Ovary (tissue), 10 donors: ENCODE measurements at regions of chr1 and their contacts with region 1.

Region 1: DNA sequence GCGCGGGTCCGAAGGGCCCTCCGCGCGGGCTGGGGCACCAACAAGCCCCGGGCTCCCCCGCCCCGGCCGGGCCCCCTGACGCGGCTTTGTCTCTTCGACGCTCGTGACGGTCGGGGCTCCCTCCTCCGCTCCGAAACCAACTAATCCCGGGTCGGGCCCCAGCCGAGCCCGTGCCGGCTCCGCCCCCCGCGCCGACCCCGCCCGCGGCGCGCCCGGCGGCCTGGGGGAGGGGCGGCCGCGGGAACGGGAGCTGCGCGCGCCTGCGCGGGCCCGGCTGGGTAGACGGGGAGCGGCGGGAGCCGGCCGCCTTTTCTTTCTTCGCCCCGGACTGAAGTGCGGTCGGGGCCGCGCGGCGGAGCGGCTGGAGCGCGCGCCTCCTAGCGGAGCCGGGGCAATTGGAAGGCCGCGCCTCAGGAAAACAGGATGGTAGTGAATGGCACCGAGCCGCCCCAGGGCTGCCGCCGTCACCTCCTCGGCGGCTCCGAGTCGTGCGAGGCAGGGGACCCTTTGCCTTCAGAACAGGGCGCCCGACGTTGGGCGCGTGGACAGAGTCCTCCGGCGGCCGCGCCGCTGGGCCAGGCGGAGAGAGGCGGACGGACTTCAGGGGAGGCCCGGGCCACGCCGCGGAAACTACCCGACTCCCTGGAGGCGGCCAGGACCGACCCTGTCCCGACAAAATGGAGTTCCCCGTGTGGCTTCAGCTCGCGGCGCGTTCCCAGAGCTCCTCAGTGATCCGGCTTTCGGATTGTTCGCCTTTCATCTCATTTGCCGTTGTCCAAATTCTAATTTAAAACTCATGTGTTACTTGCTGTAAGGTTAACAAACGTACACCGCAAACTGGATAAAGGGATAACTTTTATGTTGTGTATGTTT is at the start of gene TP53BP2:
- DNase-seq: peak; percentile 88 to 94 (median 90)
- H3K4me3 ChIP-seq: peak within 1 kb of the TSS; percentile 84
- H3K27ac ChIP-seq: peak within 1 kb of the TSS; percentile 98 to 99
- H3K4me1 ChIP-seq: peaks cover 4% of the 10 kb centered on the region
- H3K27me3 ChIP-seq: no peaks in the 10 kb centered on the region
- CTCF ChIP-seq: peak; percentile 74 to 90 (median 76)
- EP300 ChIP-seq: no peak
- POLR2A ChIP-seq: peak; percentile 82
- total RNA-seq, gene TP53BP2: 29.3 to 43.6 (median 39.3) TPM

Region 2: GRCh38 chr1:223712194-223712849 is 133.7 kb before region 1 on chr1 and contains the start of gene CAPN2:
- intact Hi-C with region 1: loop called in 1 of 4 experiments (anchors 10 kb)
- DNase-seq: peak; percentile 85 to 91 (median 88)
- H3K4me3 ChIP-seq: peak within 1 kb of the TSS; percentile 92
- H3K27ac ChIP-seq: peak within 1 kb of the TSS; percentile 91 to 93
- H3K4me1 ChIP-seq: peaks cover 22% of the 10 kb centered on the region
- H3K27me3 ChIP-seq: no peaks in the 10 kb centered on the region
- CTCF ChIP-seq: peak; percentile 54 to 93 (median 93)
- EP300 ChIP-seq: no peak
- POLR2A ChIP-seq: peak; percentile 77
- total RNA-seq, gene CAPN2: 96.1 to 267 (median 171) TPM

Region 3: DNA sequence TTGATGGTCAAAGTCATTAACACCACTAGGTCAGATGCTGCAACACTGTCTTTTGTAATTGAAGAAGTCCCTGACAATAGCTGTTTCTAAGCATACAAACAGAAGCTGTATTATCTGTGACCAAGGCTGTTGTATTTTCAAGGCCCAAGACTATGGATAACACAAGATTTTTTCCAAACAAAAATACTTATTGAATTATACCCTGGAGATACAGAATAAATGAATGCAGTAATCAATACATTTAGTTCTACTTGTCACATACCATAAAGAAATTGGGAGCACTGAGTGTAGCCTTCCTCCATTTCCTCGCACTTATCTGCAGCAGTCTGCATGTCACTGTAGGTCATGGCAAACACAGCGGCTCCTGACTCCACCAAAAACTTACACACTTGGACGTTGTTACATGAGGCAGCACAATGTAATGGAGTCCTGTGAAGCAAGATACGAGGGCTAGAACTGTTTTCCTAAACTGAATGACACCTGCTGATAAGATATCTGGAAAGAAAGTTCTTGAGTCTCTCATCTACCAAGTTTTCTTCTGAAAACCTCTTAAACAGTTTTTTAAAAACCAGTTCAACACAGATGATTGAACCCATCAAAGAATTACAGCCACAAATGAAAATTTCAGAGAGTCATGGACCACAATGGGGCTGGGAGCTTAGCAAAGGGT is 57.2 kb before region 1 on chr1:
- intact Hi-C with region 1: no loop called
- DNase-seq: no peak
- H3K4me3 ChIP-seq: no peak overlapping the region
- H3K27ac ChIP-seq: no peak overlapping the region
- H3K4me1 ChIP-seq: peaks cover 3% of the 10 kb centered on the region
- H3K27me3 ChIP-seq: no peaks in the 10 kb centered on the region
- CTCF ChIP-seq: no peak
- EP300 ChIP-seq: no peak
- POLR2A ChIP-seq: no peak